Calu3 (cell line): ENCODE measurements at regions of chr18 and their contacts with region 1.

Region 1: GRCh38 chr18:50111265-50111792 is 83.6 kb downstream of the MYO5B start:
- DNase-seq: no peak
- H3K4me3 Mint-ChIP-seq: no peak overlapping the region
- H3K27ac Mint-ChIP-seq: no peak overlapping the region
- H3K4me1 Mint-ChIP-seq: peaks cover 86% of the 10 kb centered on the region
- H3K27me3 Mint-ChIP-seq: no peaks in the 10 kb centered on the region
- CTCF ChIP-seq: no peak

Region 2: GRCh38 chr18:49813319-49814146 is 297.8 kb before region 1 on chr18 and contains the start of gene ACAA2:
- CTCF ChIA-PET with region 1: interaction called, 11 read pairs
- intact Hi-C with region 1: no loop called
- DNase-seq: peak; percentile 89
- H3K4me3 Mint-ChIP-seq: peak within 1 kb of the TSS; percentile 74
- H3K27ac Mint-ChIP-seq: peak within 1 kb of the TSS; percentile 79
- H3K4me1 Mint-ChIP-seq: peaks cover 34% of the 10 kb centered on the region
- H3K27me3 Mint-ChIP-seq: no peaks in the 10 kb centered on the region
- CTCF ChIP-seq: no peak
- total RNA-seq, gene ACAA2: 77.1 and 79.9 TPM in 2 replicates

Region 3: GRCh38 chr18:50057009-50057408 is 54.3 kb before region 1 on chr18:
- CTCF ChIA-PET with region 1: no interaction called
- intact Hi-C with region 1: loop called (anchors 5 kb)
- DNase-seq: no peak
- H3K4me3 Mint-ChIP-seq: no peak overlapping the region
- H3K27ac Mint-ChIP-seq: no peak overlapping the region
- H3K4me1 Mint-ChIP-seq: peaks cover 21% of the 10 kb centered on the region
- H3K27me3 Mint-ChIP-seq: no peaks in the 10 kb centered on the region
- CTCF ChIP-seq: peak; percentile 25